Activated CD4-positive, alpha-beta T cell treated with anti-CD3 and anti-CD28 coated beads, Interleukin-2, amount 10 ng/mL, durations not matched to agents 24 days and 14 days (primary cell): ENCODE measurements at regions of chr4 and their contacts with region 1.

Region 1: DNA sequence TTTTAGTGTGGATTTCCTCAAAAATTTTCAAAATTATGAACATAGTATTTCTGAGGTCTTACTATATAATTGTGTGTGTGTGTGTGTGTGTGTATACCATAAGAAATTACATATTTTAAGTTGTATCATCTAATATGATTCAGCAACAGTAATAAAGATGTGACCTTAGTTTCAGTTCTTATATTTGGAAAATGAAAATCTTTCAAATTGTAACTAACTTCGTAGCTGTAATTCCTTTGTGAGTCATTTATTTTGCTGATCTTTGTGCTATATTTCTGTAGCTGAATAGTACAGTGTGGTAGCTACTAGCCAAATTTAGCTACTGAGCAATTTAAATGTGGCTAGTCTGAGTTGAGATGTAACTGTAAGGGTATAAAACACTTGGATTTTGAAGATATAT is 116.4 kb downstream of the RAP1GDS1 start:
- DNase-seq: no peak
- H3K4me3 Mint-ChIP-seq: no peak overlapping the region
- H3K27ac Mint-ChIP-seq: no peak overlapping the region
- H3K4me1 Mint-ChIP-seq: peaks cover 4% of the 10 kb centered on the region
- H3K27me3 Mint-ChIP-seq: no peaks in the 10 kb centered on the region

Region 2: DNA sequence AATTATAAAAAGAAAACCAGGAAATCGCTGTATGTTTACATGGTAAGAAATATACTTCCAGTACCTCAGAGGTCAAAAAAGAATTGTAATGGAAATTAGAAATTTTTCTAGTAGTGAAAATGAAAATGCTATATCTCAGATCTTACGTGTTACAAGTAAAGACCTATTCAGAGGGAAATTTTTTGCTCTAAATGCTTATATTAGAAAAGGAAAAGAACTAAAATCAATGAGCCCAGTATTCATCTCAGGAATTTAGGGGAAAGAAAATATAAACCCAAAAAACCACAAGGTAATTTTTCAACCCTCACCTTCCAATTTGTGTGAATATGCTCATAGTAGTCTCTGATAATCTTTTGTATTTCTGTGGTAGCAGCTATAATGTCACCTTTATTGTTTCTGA is 29.3 kb after region 1 on chr4:
- intact Hi-C with region 1: loop called (anchors 1 kb)
- DNase-seq: no peak
- H3K4me3 Mint-ChIP-seq: no peak overlapping the region
- H3K27ac Mint-ChIP-seq: no peak overlapping the region
- H3K4me1 Mint-ChIP-seq: peaks cover 12% of the 10 kb centered on the region
- H3K27me3 Mint-ChIP-seq: no peaks in the 10 kb centered on the region